Gastrocnemius medialis (tissue), 4 donors: ENCODE measurements at regions of chr14 and their contacts with region 1.

Region 1: DNA sequence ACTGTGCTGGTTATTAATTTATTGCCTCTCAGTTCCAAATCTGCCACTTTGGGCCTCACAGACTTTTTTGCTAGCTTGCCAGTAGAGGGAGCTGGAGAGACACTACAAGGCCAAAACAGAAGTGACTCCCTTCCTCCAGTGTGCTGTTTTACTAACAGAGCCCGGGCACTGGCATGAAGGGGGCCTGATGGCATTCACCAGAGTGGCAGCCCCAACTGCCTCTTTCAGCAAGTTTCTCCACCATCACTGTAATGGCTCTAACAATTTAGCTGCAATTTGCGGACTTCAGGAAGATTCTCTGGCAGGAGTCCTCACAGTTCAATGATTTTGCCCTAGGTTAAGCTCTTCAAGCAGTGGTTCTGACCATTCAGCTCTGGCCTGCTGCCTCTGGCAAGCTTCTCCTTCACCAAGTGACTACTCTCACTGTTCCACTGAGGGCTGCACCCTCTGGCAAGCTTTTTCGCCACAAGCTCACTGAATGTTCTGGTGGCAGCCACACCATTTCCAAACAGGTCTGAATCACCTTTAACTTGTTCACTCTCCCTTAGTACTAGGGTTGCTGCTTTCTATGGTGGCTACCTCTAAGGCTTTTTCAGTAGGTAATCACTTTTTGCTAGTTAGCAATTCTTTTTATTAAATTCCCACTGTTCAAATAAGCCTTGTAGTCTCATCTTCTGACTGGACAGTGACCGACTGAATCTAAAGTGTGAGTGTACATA is 104.9 kb downstream of the ZC3H14 start:
- DNase-seq: peak in 1 of 2 donors; percentile 17
- ATAC-seq: peak; percentile 49 to 50
- H3K4me3 ChIP-seq: no peak overlapping the region
- H3K27ac ChIP-seq: no peak overlapping the region
- H3K4me1 ChIP-seq: no peaks in the 10 kb centered on the region
- H3K27me3 ChIP-seq: no peaks in the 10 kb centered on the region
- CTCF ChIP-seq: peak in 4 of 5 experiments; percentile 26 to 67 (median 52)
- POLR2A ChIP-seq: no peak

Region 2: GRCh38 chr14:88516861-88517357 is 150.8 kb before region 1 on chr14:
- in situ Hi-C with region 1: no loop called
- intact Hi-C with region 1: no loop called
- DNase-seq: no peak
- ATAC-seq: no peak
- H3K4me3 ChIP-seq: no peak overlapping the region
- H3K27ac ChIP-seq: no peak overlapping the region
- H3K4me1 ChIP-seq: no peaks in the 10 kb centered on the region
- H3K27me3 ChIP-seq: no peaks in the 10 kb centered on the region
- CTCF ChIP-seq: no peak
- POLR2A ChIP-seq: no peak

Region 3: GRCh38 chr14:88868558-88869159 is 200.9 kb after region 1 on chr14:
- in situ Hi-C with region 1: loop called in 1 of 4 experiments (anchors 25 kb)
- intact Hi-C with region 1: loop called (anchors 5 kb)
- DNase-seq: no peak
- ATAC-seq: no peak
- H3K4me3 ChIP-seq: no peak overlapping the region
- H3K27ac ChIP-seq: no peak overlapping the region
- H3K4me1 ChIP-seq: no peaks in the 10 kb centered on the region
- H3K27me3 ChIP-seq: no peaks in the 10 kb centered on the region
- CTCF ChIP-seq: peak in 1 of 5 experiments; percentile 24
- POLR2A ChIP-seq: no peak